ENCODE measurements at regions of chr15 and their contacts with region 1.

Region 1: DNA sequence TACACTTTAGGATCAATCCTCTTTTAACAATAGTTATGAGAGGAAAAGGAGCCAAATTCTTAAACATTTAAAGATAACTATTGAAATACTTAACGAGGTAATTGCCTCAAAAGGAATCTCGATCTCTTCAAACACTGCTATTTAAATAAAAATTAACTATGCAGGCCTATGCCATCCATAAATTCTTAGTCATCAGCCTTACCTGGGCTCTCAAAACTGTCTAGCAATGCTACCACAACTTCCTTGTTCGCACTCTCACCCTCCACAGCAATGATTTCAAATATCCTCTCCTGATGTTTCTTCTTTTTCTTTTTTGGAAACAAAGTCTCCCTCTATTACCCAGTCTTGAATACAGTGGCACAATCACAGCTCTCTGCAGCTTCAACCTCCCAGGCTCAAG is 12.3 kb downstream of the ETFA start:
- DNase-seq: no peak
- ATAC-seq: peak; percentile 51; the same call in 2 of the 3 replicates
- H3K4me3 ChIP-seq: no peak overlapping the region
- H3K27ac ChIP-seq: no peak overlapping the region
- H3K4me1 ChIP-seq: peaks cover 6% of the 10 kb centered on the region
- H3K27me3 ChIP-seq: no peaks in the 10 kb centered on the region
- CTCF ChIP-seq: no peak
- EP300 ChIP-seq: no peak
- POLR2A ChIP-seq: no peak
- RAD21 ChIP-seq: no peak

Region 2: GRCh38 chr15:76286271-76286879 is 12.6 kb before region 1 on chr15:
- CTCF ChIA-PET with region 1: interaction called, 4 read pairs
- POLR2A ChIA-PET with region 1: interaction called, 6 read pairs
- RAD21 ChIA-PET with region 1: interaction called, 7 read pairs
- SMC1A ChIA-PET with region 1: interaction called, 10 read pairs
- in situ Hi-C with region 1: no loop called
- intact Hi-C with region 1: no loop called
- DNase-seq: peak; percentile 28
- ATAC-seq: peak; percentile 93
- H3K4me3 ChIP-seq: no peak overlapping the region
- H3K27ac ChIP-seq: peak overlapping the region; percentile 27
- H3K4me1 ChIP-seq: peaks cover 4% of the 10 kb centered on the region; the same call in 1 of the 2 replicates
- H3K27me3 ChIP-seq: no peaks in the 10 kb centered on the region
- CTCF ChIP-seq: no peak
- EP300 ChIP-seq: no peak
- POLR2A ChIP-seq: no peak
- RAD21 ChIP-seq: no peak

Region 3: GRCh38 chr15:76311100-76311953 is 12.3 kb after region 1 on chr15 and contains the start of gene ETFA:
- CTCF ChIA-PET with region 1: interaction called, 15 read pairs
- POLR2A ChIA-PET with region 1: interaction called, 9 read pairs
- RAD21 ChIA-PET with region 1: interaction called, 4 read pairs
- SMC1A ChIA-PET with region 1: interaction called, 12 read pairs
- in situ Hi-C with region 1: no loop called
- intact Hi-C with region 1: no loop called
- DNase-seq: peak; percentile 91
- ATAC-seq: peak; percentile 99
- H3K4me3 ChIP-seq: peak within 1 kb of the TSS; percentile 99
- H3K27ac ChIP-seq: peak within 1 kb of the TSS; percentile 75
- H3K4me1 ChIP-seq: peaks cover 3% of the 10 kb centered on the region; the same call in 1 of the 2 replicates
- H3K27me3 ChIP-seq: no peaks in the 10 kb centered on the region
- CTCF ChIP-seq: no peak
- EP300 ChIP-seq: no peak
- POLR2A ChIP-seq: peak; percentile 100
- RAD21 ChIP-seq: no peak
- polyA plus RNA-seq, gene ETFA: 114 to 124 TPM